MCF 10A (cell line): ENCODE measurements at regions of chr2 and their contacts with region 1.

Region 1: DNA sequence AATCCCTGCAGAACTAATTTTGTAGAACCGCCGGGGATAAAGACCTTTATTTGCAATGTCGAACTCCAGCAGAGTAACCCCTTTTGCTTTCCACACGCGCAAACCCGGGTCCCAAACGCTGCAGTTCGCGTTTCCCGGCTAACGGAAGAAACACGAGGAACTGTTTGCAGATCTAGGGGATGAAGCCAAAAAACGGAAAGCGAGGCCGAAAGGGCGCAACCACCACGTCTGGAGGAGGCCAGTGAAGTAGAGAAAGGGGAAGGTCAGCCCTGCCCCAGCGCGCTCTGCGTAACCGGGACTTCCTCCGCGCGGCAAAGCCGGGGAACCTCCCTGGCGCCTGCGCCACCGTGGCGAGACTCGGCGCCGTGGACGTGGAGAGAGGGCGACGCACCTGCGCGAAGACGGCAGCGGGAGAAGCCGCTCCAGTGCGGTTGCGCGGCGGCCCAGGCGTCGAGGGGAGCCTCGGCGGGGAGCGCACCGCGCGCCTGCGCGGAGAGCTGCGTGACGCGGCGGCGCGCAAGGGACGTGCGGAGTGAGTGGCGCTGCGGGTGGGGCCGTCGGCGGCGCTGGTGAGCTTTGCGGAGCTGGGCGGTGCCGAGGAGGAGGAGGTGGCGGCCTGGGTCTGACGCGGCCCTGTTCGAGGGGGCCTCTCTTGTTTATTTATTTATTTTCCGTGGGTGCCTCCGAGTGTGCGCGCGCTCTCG is at the start of gene PPP1CB:
- DNase-seq: peak; percentile 92
- H3K4me3 Mint-ChIP-seq: peak within 1 kb of the TSS; percentile 95
- H3K27ac Mint-ChIP-seq: peak within 1 kb of the TSS; percentile 98
- H3K4me1 Mint-ChIP-seq: peaks cover 20% of the 10 kb centered on the region
- H3K27me3 Mint-ChIP-seq: no peaks in the 10 kb centered on the region
- CTCF ChIP-seq: peak; percentile 21
- total RNA-seq, gene PPP1CB: 244 and 269 TPM in 2 replicates

Region 2: GRCh38 chr2:28406276-28407096 is 344.9 kb before region 1 on chr2:
- CTCF ChIA-PET with region 1: no interaction called
- POLR2A ChIA-PET with region 1: no interaction called
- intact Hi-C with region 1: loop called (anchors 5 kb)
- DNase-seq: peak; percentile 75
- H3K4me3 Mint-ChIP-seq: no peak overlapping the region
- H3K27ac Mint-ChIP-seq: peak overlapping the region; percentile 85
- H3K4me1 Mint-ChIP-seq: peaks cover 40% of the 10 kb centered on the region
- H3K27me3 Mint-ChIP-seq: no peaks in the 10 kb centered on the region
- CTCF ChIP-seq: no peak

Region 3: DNA sequence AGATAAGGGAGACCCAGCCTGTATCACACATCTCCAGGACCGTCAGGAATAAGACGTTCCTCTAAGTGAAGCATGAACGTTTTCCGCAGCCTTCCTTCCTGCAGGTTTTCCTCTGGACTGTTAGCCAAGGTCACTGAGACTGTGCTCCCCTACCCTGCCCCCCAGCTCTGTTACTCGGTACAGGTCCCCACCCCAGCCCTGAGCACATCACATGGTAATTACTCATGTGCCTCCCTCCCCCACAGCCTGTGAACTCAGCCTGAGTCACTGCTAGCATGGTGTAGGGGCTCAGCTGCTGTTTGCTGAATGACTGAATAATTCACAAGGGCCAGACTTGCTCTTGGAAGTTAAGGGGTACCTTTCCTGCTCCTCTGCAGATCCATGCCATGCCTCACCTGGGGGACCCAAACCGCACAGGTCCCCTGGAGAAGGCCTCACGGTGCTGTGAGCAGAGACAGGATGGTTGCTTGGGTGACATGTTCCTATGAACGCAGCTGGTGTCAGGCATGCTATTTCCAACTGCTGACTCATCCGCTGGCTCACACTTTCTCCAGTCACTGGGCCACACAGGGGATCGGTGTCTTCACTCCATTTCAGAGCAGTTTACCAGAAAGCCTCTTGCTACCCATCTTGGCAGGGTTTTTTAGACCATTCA is 167.4 kb before region 1 on chr2:
- CTCF ChIA-PET with region 1: interaction called, 4 read pairs
- POLR2A ChIA-PET with region 1: interaction called, 55 read pairs
- intact Hi-C with region 1: no loop called
- DNase-seq: peak; percentile 95
- H3K4me3 Mint-ChIP-seq: peak overlapping the region; percentile 61
- H3K27ac Mint-ChIP-seq: peak overlapping the region; percentile 84
- H3K4me1 Mint-ChIP-seq: peaks cover 34% of the 10 kb centered on the region
- H3K27me3 Mint-ChIP-seq: no peaks in the 10 kb centered on the region
- CTCF ChIP-seq: no peak

Region 4: GRCh38 chr2:28621172-28622100 is 130.0 kb before region 1 on chr2:
- CTCF ChIA-PET with region 1: interaction called, 3 read pairs
- POLR2A ChIA-PET with region 1: interaction called, 25 read pairs
- intact Hi-C with region 1: loop called (anchors 1 kb)
- DNase-seq: peak; percentile 73
- H3K4me3 Mint-ChIP-seq: peak overlapping the region; percentile 9
- H3K27ac Mint-ChIP-seq: peak overlapping the region; percentile 98
- H3K4me1 Mint-ChIP-seq: peaks cover 27% of the 10 kb centered on the region
- H3K27me3 Mint-ChIP-seq: no peaks in the 10 kb centered on the region
- CTCF ChIP-seq: peak; percentile 30

Region 5: DNA sequence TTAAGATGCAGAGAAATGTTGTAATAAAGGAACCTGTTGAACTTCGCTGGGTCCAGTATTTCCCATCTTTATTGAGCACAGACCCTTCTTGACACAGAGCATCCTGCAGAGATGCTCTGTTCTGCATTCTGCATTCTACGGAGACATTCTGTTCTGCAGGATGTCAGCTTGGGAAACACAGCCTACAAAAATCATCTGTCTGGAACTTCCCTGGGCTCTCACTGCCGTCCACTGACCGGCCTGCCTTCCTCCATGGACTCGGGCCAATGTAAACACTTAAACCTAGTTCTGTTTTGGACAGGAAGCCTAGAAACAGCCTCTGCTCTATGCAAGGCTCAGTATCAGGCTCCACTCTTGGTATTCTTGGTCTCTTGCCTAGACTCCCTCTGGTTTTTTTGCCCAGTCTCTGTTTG is 89.8 kb before region 1 on chr2:
- CTCF ChIA-PET with region 1: interaction called, 4 read pairs
- POLR2A ChIA-PET with region 1: interaction called, 41 read pairs
- intact Hi-C with region 1: loop called (anchors 5 kb)
- DNase-seq: peak; percentile 88
- H3K4me3 Mint-ChIP-seq: no peak overlapping the region
- H3K27ac Mint-ChIP-seq: peak overlapping the region; percentile 78
- H3K4me1 Mint-ChIP-seq: peaks cover 44% of the 10 kb centered on the region
- H3K27me3 Mint-ChIP-seq: no peaks in the 10 kb centered on the region
- CTCF ChIP-seq: no peak

Region 6: DNA sequence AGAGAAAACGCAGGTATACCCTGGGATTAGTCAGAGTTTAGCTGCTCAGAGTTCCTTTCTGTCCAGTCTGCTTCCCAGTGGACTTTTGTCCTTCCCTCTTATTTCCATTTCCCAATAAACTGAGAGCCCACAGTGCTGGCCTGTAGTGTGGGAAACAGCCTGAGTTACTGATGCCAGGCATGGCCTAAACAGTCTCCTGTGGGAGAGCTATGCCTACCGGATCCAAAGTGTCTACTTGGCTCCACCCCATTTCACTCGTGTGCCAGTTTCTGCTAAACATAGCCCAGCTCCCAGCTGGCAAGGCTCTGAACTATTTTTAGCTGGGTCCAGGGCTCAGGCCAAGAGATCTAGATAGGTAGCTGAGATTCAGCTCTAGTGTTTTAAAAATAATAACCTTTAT is 15.4 kb before region 1 on chr2:
- CTCF ChIA-PET with region 1: no interaction called
- POLR2A ChIA-PET with region 1: interaction called, 17 read pairs
- intact Hi-C with region 1: no loop called
- DNase-seq: peak; percentile 78
- H3K4me3 Mint-ChIP-seq: no peak overlapping the region
- H3K27ac Mint-ChIP-seq: no peak overlapping the region
- H3K4me1 Mint-ChIP-seq: no peaks in the 10 kb centered on the region
- H3K27me3 Mint-ChIP-seq: no peaks in the 10 kb centered on the region
- CTCF ChIP-seq: no peak

Region 7: GRCh38 chr2:30003128-30003527 is 1251.7 kb after region 1 on chr2:
- CTCF ChIA-PET with region 1: no interaction called
- POLR2A ChIA-PET with region 1: no interaction called
- intact Hi-C with region 1: no loop called
- DNase-seq: no peak
- H3K4me3 Mint-ChIP-seq: no peak overlapping the region
- H3K27ac Mint-ChIP-seq: no peak overlapping the region
- H3K4me1 Mint-ChIP-seq: no peaks in the 10 kb centered on the region
- H3K27me3 Mint-ChIP-seq: peaks cover 32% of the 10 kb centered on the region
- CTCF ChIP-seq: no peak